ENCODE measurements at regions of chr9 and their contacts with region 1.

Region 1: DNA sequence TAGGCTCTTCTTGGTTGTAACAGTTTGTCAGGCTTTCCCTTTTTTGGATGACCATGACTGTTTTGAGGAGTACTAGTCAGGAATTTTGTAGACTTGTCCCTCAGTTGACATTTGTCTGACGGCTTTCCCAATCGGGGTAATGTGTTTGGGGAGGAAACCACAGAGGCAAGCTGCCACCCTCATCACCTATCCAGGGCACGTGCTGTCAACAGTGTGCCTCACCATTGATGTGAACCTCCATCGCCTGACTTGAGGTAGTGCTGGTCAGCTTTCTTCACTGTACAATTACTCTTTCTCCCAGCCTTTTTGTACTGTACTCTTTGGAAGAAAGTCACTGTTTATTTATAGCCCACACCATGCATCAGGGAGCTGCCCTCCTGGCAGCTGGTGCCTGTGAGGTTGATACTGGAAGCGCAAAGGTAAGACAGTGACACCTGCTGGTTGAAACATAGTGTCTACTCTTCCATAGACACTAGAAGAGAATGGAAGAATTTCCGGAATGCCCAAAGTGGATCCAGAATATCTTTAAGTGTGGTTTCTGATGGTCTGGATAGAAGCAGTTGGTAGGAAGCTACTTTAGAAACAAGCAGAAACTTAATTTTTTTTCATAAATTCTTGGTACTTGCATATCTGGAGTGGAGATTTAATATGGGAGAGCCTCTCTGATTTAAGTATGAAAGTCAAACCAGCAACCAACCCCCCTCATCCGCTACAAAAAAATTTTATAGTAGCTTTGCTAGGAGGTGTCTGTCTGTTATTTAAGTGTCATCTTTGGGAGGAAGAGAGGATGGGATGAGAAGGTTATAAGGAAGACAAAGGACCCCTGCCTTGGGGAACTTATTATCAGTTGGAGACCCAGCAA is 69.3 kb downstream of the SNX30 start:
- DNase-seq: peak; percentile 12
- ATAC-seq: peak; percentile 95
- H3K4me3 ChIP-seq: no peak overlapping the region
- H3K27ac ChIP-seq: no peak overlapping the region
- H3K4me1 ChIP-seq: no peaks in the 10 kb centered on the region
- H3K27me3 ChIP-seq: no peaks in the 10 kb centered on the region
- CTCF ChIP-seq: peak; percentile 80

Region 2: GRCh38 chr9:112762726-112763518 is 56.9 kb before region 1 on chr9:
- CTCF ChIA-PET with region 1: interaction called, 11 read pairs
- POLR2A ChIA-PET with region 1: no interaction called
- in situ Hi-C with region 1: no loop called
- intact Hi-C with region 1: no loop called
- DNase-seq: no peak
- ATAC-seq: no peak
- H3K4me3 ChIP-seq: no peak overlapping the region
- H3K27ac ChIP-seq: no peak overlapping the region
- H3K4me1 ChIP-seq: no peaks in the 10 kb centered on the region
- H3K27me3 ChIP-seq: no peaks in the 10 kb centered on the region
- CTCF ChIP-seq: no peak